HCT116 (cell line): ENCODE measurements at regions of chr1 and their contacts with region 1.

Region 1: DNA sequence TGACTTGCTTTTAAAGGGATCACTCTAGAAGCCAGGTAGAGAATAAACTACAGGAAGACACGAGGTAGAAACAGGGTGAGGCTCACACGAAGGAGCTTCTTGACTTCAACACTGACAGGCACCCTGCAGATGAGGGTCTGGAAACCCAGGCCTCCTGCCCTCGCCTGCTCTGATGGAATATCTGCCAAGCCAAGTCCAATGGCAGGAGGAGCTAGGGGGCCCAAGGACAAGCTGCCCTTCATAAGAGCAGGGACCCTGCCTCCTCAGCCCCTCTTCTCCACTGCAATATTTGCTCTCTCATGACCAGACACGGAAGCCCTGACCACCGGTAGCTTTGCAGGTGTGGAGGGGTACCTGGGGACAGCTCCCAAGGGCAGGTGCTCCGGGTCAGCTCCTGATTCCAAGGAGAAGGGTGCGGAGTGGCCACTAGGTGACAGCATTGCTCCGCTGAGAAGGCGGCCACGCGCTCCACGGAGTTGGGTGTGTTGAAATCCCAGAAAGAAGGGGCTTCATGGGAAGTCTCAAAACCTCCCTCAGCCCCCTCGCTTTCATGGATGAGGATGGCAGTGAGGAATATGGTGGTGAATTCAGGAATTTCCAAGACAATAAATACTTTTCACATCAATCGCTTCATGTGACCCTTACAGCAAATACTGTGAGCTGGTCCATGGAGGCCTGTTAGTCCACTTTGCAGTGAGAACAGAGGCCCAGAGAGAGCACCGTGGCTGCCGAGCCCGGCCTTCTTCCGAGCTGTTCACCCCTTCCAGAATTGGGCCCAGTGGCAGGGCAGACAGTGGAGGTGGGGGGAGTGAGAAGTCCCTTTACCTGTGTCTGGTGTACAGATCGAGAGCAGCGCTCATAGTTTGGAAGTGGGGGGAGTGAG is 33.2 kb upstream of the PAX7 start:
- DNase-seq: no peak
- ATAC-seq: peak; percentile 96
- H3K4me3 ChIP-seq: no peak overlapping the region
- H3K27ac ChIP-seq: no peak overlapping the region
- H3K4me1 ChIP-seq: no peaks in the 10 kb centered on the region
- H3K27me3 ChIP-seq: peaks cover 9% of the 10 kb centered on the region; the same call in 1 of the 2 replicates
- CTCF ChIP-seq: peak; percentile 90 to 97 (median 94)
- POLR2A ChIP-seq: no peak
- RAD21 ChIP-seq: peak; percentile 97

Region 2: GRCh38 chr1:18681423-18681835 is 84.0 kb after region 1 on chr1:
- CTCF ChIA-PET with region 1: interaction called, 11 read pairs
- POLR2A ChIA-PET with region 1: no interaction called
- RAD21 ChIA-PET with region 1: no interaction called
- intact Hi-C with region 1: loop called (anchors 2 kb)
- DNase-seq: peak; percentile 29
- ATAC-seq: peak; percentile 91
- H3K4me3 ChIP-seq: no peak overlapping the region
- H3K27ac ChIP-seq: no peak overlapping the region
- H3K4me1 ChIP-seq: no peaks in the 10 kb centered on the region; a peak in 2 of 4 replicates
- H3K27me3 ChIP-seq: no peaks in the 10 kb centered on the region
- CTCF ChIP-seq: peak; percentile 61 to 81 (median 72); a peak in 5 of 6 replicates
- POLR2A ChIP-seq: no peak
- RAD21 ChIP-seq: peak; percentile 80

Region 3: GRCh38 chr1:18820791-18821641 is 223.6 kb after region 1 on chr1:
- CTCF ChIA-PET with region 1: interaction called, 45 read pairs
- POLR2A ChIA-PET with region 1: no interaction called
- RAD21 ChIA-PET with region 1: interaction called, 9 to 12 read pairs
- intact Hi-C with region 1: loop called (anchors 1 kb)
- DNase-seq: peak; percentile 37
- ATAC-seq: peak; percentile 96
- H3K4me3 ChIP-seq: no peak overlapping the region
- H3K27ac ChIP-seq: no peak overlapping the region
- H3K4me1 ChIP-seq: peaks cover 0 to 4% of the 10 kb centered on the region in 2 experiments; a peak in 1 of 4 replicates
- H3K27me3 ChIP-seq: no peaks in the 10 kb centered on the region
- CTCF ChIP-seq: peak; percentile 72 to 97 (median 91)
- POLR2A ChIP-seq: no peak
- RAD21 ChIP-seq: peak; percentile 88

Region 4: GRCh38 chr1:18875107-18875795 is 277.9 kb after region 1 on chr1:
- CTCF ChIA-PET with region 1: interaction called, 61 read pairs
- POLR2A ChIA-PET with region 1: no interaction called
- RAD21 ChIA-PET with region 1: interaction called, 9 to 13 read pairs
- intact Hi-C with region 1: loop called (anchors 1 kb)
- DNase-seq: peak; percentile 81
- ATAC-seq: peak; percentile 97
- H3K4me3 ChIP-seq: no peak overlapping the region
- H3K27ac ChIP-seq: no peak overlapping the region
- H3K4me1 ChIP-seq: peaks cover 0 to 6% of the 10 kb centered on the region in 2 experiments; a peak in 1 of 4 replicates
- H3K27me3 ChIP-seq: no peaks in the 10 kb centered on the region
- CTCF ChIP-seq: peak; percentile 91 to 94 (median 92)
- POLR2A ChIP-seq: no peak
- RAD21 ChIP-seq: peak; percentile 89

Region 5: GRCh38 chr1:18913065-18913835 is 315.8 kb after region 1 on chr1:
- CTCF ChIA-PET with region 1: interaction called, 11 read pairs
- POLR2A ChIA-PET with region 1: no interaction called
- RAD21 ChIA-PET with region 1: no interaction called
- intact Hi-C with region 1: loop called (anchors 1 kb)
- DNase-seq: peak; percentile 50
- ATAC-seq: peak; percentile 98
- H3K4me3 ChIP-seq: no peak overlapping the region
- H3K27ac ChIP-seq: no peak overlapping the region
- H3K4me1 ChIP-seq: peaks cover 0 to 8% of the 10 kb centered on the region in 2 experiments; a peak in 1 of 4 replicates
- H3K27me3 ChIP-seq: no peaks in the 10 kb centered on the region
- CTCF ChIP-seq: peak; percentile 100
- POLR2A ChIP-seq: no peak
- RAD21 ChIP-seq: peak; percentile 97

Region 6: DNA sequence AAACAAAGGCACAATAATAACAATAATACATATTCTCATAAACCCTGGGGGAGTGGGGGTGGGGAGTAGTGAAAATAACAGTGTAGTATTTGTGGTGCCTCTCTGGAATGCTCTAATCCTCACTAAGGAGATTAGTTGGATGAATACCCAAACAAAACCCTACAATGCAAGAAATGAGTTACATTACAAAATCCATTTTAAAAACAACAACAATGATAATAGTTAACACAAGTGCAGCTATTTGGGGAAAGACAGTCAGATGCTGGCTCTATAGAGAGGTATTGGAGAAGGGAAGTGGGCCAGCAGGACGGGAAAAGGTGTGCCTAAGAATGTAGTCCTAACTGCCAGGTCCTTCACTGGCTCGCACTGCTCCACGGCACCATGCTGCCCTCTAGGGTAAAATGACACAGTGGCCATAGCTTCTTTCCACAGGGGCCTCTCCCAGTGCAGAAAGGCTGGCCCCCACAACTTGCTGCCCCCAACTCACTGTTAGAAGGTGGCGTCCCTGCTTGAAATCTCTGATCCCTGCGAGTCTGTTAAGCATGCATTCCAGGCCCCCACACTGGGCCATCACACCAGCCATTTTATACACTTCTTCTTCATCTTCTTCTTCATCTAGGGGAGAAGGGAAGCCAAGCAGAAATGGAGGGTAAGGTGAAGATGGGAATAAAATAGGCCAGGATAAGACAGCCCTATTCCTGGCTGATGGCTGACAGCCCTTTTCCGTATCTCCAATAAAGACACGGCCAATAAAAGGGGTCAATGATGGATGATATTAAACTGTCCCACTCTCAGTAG is 498.8 kb after region 1 on chr1:
- CTCF ChIA-PET with region 1: no interaction called
- POLR2A ChIA-PET with region 1: no interaction called
- RAD21 ChIA-PET with region 1: no interaction called
- intact Hi-C with region 1: loop called (anchors 1 kb)
- DNase-seq: peak; percentile 6
- ATAC-seq: peak; percentile 87
- H3K4me3 ChIP-seq: no peak overlapping the region
- H3K27ac ChIP-seq: no peak overlapping the region
- H3K4me1 ChIP-seq: no peaks in the 10 kb centered on the region
- H3K27me3 ChIP-seq: no peaks in the 10 kb centered on the region
- CTCF ChIP-seq: peak; percentile 51 to 81 (median 55)
- POLR2A ChIP-seq: no peak
- RAD21 ChIP-seq: peak; percentile 82